GM10248 (cell line): ENCODE measurements at regions of chr19 and their contacts with region 1.

Region 1: GRCh38 chr19:46265217-46265828 is 31.5 kb upstream of the HIF3A start:
- DNase-seq: peak; percentile 73
- CTCF ChIP-seq: peak; percentile 75

Region 2: DNA sequence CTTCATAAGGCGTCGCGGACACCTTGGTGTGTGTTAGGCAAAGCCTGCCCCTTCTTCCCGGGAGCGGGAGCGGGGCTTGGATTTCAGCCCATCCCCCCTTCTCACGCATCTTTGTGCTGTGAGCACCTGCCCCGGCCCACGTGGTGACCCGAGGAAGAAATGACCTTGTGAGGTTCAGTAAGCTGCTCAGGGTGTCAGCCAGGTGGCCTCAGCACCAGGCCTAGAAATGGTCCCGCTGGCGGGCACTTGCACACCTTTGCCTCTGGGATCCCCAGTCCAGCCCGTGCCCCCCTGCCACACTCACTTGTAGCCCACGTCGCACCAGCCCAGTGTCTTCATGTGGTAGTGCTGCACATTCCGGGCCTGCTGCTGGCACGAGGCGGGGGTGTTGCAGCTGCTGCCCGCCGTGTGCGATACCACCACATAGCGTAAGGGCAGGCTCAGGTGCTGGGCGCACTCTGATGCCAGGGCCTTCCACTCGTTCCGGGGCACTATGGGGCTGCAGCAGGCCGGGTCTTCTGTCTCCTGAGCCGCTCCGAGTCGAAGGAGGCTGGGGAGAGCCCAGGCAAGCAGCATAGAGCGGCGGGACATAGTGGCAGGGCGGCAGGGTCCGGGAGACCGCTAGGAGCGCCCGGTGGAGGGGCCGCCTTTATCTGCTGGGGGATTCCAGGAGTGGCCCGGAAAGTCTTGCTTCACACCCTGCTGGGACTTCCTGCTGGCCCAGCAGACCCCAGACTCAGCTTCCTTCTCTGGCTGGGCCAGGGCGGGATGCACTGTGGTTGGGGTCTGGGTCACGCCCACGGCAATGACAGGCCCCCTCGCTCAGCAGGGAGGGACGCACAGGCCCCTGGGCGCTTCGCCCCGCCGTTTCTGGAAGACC is 242.7 kb before region 1 on chr19 and contains the start of gene PGLYRP1:
- CTCF ChIA-PET with region 1: interaction called, 91 read pairs
- POLR2A ChIA-PET with region 1: no interaction called
- DNase-seq: no peak
- CTCF ChIP-seq: no peak

Region 3: GRCh38 chr19:46030812-46031550 is 234.3 kb before region 1 on chr19:
- CTCF ChIA-PET with region 1: interaction called, 91 read pairs
- POLR2A ChIA-PET with region 1: no interaction called
- DNase-seq: no peak
- CTCF ChIP-seq: no peak

Region 4: DNA sequence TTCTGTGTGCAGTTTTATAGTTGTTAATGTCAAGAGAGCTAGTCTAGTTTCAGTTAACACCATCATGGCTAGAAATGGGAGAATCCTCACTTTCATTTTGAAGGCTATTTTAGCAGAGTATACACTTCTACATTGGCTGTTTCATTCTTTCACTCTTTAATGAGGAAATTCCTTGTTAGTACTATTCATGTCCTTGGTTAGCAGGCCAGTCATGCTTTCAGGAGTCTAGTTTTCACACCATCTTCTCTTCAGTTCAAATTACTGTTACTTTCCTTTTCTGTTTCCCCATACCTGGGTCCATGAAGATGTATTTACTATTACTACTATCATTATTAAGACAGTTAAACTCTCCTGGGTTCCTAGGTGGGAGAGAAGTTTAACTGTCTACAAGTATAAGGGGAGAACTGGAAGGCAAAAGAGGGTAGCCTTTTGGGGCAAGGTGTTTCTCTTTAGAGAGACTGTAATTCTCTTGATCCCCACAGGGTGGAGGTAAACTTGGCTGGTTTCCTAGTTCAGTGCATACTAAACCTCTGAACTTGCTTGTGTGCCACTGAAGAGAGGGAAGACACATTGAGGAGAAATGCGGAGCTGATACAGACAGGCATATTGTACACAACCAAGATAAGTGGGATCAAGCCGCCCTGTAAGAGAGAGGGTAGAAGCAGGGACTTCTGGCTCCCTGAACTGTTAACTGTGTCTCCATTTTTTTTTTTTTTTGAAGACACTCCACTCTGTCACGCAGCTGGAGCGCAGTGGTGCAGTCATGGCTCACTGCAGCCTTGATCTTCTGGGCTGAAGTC is 183.2 kb before region 1 on chr19:
- CTCF ChIA-PET with region 1: interaction called, 23 read pairs
- POLR2A ChIA-PET with region 1: no interaction called
- DNase-seq: peak; percentile 51
- CTCF ChIP-seq: peak; percentile 45

Region 5: GRCh38 chr19:46279177-46279576 is 13.9 kb after region 1 on chr19:
- CTCF ChIA-PET with region 1: interaction called, 18 read pairs
- POLR2A ChIA-PET with region 1: no interaction called
- DNase-seq: no peak
- CTCF ChIP-seq: no peak

Region 6: GRCh38 chr19:46294494-46294893 is 29.2 kb after region 1 on chr19:
- CTCF ChIA-PET with region 1: no interaction called
- POLR2A ChIA-PET with region 1: no interaction called
- DNase-seq: no peak
- CTCF ChIP-seq: no peak

Region 7: GRCh38 chr19:46308510-46308909 is 43.2 kb after region 1 on chr19:
- CTCF ChIA-PET with region 1: no interaction called
- POLR2A ChIA-PET with region 1: no interaction called
- DNase-seq: no peak
- CTCF ChIP-seq: no peak